ENCODE measurements at regions of chr20 and their contacts with region 1.

Region 1: DNA sequence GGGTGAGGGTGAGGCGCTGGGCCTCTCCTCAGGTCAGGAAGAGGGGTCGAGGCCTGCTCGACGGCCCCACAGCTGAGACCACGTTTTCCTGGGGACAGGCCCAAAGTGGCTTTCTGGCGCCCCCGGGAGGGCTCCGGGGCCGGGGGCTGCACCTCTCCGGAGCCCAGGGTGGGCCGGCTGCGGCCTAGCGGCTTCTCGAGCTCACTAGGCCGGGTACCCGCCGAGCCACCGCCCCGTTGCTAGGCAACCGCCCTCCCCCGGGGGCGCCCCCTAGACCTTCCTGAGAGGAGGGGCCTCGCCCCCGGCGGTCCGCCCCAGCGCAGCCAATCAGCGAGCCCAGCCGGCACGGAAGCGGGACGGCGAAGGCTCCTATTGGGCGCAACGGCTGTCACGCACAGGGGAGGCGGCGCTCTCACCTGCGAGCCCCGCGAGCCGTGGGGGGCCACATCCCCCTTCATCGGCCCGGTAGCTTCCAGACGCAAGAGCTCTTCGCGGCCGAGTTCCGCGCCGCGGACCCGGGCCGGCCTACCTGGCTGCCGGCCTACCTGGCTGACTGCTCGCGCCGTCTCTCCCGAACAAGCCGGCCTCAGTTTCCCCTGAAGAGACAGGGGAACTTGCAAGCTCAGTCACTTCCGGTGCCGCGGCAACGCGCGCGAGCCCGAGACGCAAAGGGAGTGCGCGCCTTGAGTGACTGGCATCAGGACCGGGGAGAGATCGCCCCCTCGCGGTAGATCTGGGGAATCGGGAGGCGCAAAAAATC is 831 bp upstream of the BCL2L1 start:
- DNase-seq: peak; percentile 97
- H3K4me3 Mint-ChIP-seq: peak overlapping the region; percentile 96
- H3K27ac Mint-ChIP-seq: peak overlapping the region; percentile 97
- H3K4me1 Mint-ChIP-seq: peaks cover 28% of the 10 kb centered on the region
- H3K27me3 Mint-ChIP-seq: no peaks in the 10 kb centered on the region

Region 2: DNA sequence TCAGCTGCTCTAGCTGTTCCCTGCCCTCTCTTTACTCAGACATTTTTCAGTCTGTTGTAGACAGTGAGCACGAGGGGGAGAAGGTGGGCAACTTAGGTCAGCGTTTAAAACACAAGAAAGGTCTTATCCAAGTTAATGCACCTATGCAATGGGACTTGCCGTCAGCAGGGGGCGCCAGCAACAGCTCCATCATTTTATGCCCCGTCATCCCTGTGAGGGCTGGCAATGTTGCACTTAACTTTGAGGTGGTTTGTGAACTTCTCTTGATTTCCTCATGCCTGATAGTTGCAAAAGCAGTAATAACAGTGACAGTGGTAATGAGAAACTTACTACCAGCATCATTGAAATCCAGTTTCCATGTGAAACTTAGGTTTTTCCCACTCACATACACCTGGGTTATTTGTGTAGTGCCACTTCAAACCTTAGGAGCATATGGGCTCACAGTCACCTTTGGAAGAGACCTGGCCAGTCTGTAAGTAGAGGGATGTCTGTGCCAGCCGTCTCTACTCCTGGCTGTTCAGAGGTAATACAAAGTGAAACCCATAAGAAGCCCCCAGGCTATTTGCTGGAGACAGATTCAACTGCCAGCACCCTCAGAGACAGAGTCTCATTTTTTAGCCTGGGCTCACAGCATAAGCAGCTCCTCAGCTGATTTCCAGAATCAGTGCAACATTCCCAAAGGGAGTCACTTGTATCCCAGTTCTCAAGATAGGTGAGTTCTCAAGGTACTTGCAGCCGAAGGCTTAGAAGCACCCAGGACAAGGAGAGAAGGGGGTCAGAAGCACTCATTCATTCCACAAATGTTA is 163.2 kb before region 1 on chr20:
- CTCF ChIA-PET with region 1: interaction called, 11 read pairs
- DNase-seq: peak; percentile 88
- H3K4me3 Mint-ChIP-seq: no peak overlapping the region
- H3K27ac Mint-ChIP-seq: peak overlapping the region; percentile 90
- H3K4me1 Mint-ChIP-seq: peaks cover 15% of the 10 kb centered on the region
- H3K27me3 Mint-ChIP-seq: no peaks in the 10 kb centered on the region

Region 3: GRCh38 chr20:31652917-31653396 is 70.5 kb before region 1 on chr20:
- CTCF ChIA-PET with region 1: interaction called, 11 read pairs
- DNase-seq: no peak
- H3K4me3 Mint-ChIP-seq: no peak overlapping the region
- H3K27ac Mint-ChIP-seq: no peak overlapping the region
- H3K4me1 Mint-ChIP-seq: no peaks in the 10 kb centered on the region
- H3K27me3 Mint-ChIP-seq: peaks cover 35% of the 10 kb centered on the region

Region 4: DNA sequence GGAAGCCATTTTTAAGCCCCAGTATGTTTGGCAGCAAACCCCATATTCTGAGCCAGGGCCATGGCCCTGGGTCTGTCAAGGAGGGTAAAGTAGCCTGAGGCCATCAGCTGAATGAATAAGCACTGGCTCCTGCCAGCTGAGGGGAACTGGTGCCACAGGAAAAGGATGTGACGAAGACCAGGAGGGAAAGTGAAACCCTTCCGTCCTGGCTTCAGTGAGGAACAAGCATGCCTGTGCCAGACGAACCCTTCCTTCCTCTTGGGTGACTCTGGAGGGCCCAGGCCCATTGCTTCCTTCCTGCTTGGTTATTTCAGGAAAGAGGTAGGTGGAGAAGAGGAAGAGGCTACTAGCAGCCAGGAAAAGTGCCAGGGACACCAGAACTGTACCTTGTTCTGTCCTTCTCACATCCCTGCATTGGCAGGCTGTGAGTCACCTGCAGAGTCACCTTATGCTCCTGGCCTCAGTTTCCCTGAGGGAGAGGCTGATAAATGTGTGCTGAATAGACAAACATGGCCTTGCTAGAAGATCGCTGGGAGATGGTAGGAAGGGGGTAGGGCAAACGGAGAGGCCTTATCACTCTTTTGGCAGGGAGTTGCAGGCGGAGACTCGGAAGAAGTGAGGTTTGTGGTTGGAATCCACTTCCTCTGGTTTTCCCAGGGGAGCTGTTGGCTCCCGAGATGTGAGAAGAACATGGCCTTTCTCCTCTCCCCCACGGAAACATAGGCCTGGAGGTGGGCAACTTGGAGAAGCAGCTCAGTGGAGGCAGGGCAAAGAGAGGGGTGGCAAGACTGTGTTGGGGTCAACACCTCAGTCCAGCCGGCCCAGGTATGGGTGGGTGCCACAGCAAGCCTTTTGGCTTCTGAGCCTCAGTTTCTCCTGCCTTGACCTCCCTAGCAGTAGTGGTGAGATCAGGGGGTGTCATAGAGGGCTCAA is 48.3 kb before region 1 on chr20:
- CTCF ChIA-PET with region 1: interaction called, 38 read pairs
- DNase-seq: peak; percentile 84
- H3K4me3 Mint-ChIP-seq: peak overlapping the region; percentile 88
- H3K27ac Mint-ChIP-seq: peak overlapping the region; percentile 98
- H3K4me1 Mint-ChIP-seq: peaks cover 89% of the 10 kb centered on the region
- H3K27me3 Mint-ChIP-seq: no peaks in the 10 kb centered on the region

Region 5: GRCh38 chr20:31698803-31699718 is 24.4 kb before region 1 on chr20:
- CTCF ChIA-PET with region 1: interaction called, 48 read pairs
- DNase-seq: peak; percentile 43
- H3K4me3 Mint-ChIP-seq: no peak overlapping the region
- H3K27ac Mint-ChIP-seq: peak overlapping the region; percentile 85
- H3K4me1 Mint-ChIP-seq: peaks cover 63% of the 10 kb centered on the region
- H3K27me3 Mint-ChIP-seq: no peaks in the 10 kb centered on the region

Region 6: GRCh38 chr20:31738729-31739561 is 15.4 kb after region 1 on chr20 and contains the start of gene TPX2:
- CTCF ChIA-PET with region 1: interaction called, 17 read pairs
- DNase-seq: peak; percentile 91
- H3K4me3 Mint-ChIP-seq: no peak within 1 kb of the TSS
- H3K27ac Mint-ChIP-seq: no peak within 1 kb of the TSS
- H3K4me1 Mint-ChIP-seq: peaks cover 8% of the 10 kb centered on the region
- H3K27me3 Mint-ChIP-seq: peaks cover 10% of the 10 kb centered on the region

Measured in activated naive CD4-positive, alpha-beta T cell treated with anti-CD3 and anti-CD28 coated beads, Interleukin-2, amount 10 ng/mL, durations not matched to agents 7 days and 5 days (primary cell).